Activated naive CD4-positive, alpha-beta T cell treated with anti-CD3 and anti-CD28 coated beads for 36 hours (primary cell): ENCODE measurements at regions of chr5 and their contacts with region 1.

Region 1: DNA sequence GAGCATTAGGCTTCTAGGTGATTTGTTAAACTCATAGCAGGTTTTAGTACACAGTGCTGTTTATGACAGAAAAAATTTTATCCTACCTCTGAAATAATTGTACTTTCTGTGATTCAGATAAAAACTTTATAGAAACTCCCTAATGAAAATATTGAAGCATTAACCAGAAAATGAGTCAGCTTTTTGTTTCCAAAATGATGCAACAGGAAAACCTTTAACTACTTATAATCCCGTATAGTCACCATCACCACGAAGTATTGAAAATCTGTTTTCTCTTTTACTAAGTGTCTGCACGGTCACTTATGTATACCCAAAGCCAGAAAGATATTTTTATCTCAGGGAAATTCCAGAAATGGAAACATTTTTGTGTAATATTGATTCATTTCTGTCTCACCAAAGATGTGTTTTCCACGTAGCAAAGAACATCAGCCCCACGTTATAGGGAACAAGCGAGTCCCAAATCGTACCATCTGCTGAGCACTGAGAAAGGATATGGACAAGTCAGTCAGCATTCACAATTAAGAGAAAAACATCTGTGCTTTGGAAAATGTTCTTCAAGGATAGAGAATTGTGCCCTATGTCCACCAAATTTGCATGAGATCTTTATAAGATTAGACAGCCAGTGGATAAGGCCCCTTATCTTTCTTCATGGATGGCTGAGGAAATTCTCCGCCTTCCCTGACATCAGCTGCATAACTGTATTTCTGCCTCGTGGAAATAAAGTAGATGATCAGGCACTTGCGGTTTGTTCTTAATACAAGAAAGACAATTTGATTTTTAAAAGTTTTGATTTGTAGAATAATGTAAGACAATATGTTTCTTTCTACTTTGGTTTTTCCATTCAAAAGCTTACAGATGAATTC is 41.9 kb downstream of the TNFAIP8 start:
- DNase-seq: peak; percentile 55
- H3K4me3 Mint-ChIP-seq: peak overlapping the region; percentile 23
- H3K27ac Mint-ChIP-seq: peak overlapping the region; percentile 89
- H3K4me1 Mint-ChIP-seq: peaks cover 89% of the 10 kb centered on the region
- H3K27me3 Mint-ChIP-seq: no peaks in the 10 kb centered on the region

Region 2: GRCh38 chr5:118736396-118736795 is 661.4 kb before region 1 on chr5:
- CTCF ChIA-PET with region 1: no interaction called
- intact Hi-C with region 1: no loop called
- DNase-seq: no peak
- H3K4me3 Mint-ChIP-seq: no peak overlapping the region
- H3K27ac Mint-ChIP-seq: no peak overlapping the region
- H3K4me1 Mint-ChIP-seq: no peaks in the 10 kb centered on the region
- H3K27me3 Mint-ChIP-seq: no peaks in the 10 kb centered on the region

Region 3: DNA sequence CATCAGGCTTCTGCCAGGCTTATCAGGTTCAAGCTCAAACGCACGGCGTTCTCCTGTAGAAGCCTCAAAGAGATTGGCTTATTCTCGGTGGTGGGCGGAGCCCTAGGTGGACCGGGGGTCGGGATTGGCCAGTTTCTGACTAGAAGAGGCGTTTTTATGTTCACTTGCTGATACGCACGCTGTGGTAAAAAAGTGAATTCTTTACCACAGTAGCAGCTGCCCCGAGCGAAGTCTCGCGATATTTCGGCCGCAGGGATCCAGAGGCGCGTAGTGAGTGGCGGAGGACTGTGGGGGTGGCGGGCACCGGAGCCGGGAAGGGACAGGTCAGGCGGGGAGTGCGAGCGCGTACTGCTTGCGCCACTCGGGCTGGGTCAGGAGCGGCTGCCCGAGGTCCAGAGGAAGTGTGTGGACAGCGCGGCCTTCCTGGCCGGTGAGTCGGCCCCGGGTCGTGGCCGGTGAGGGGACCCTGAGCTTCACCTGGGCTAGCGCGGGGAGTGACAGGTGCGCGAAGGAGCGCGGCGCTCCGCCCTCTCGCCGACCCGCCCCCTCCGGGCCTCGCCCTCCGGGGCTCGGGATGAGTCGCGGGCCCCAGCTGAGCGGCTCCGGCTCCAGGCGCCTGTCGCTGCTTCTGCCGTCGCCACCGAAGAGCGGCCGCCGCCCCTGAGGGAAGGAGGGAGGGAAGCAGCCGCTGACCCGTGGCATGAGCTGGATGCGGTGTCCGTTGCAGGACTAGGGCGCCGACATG is 326.7 kb before region 1 on chr5 and contains the start of gene DMXL1:
- CTCF ChIA-PET with region 1: no interaction called
- intact Hi-C with region 1: loop called (anchors 1 kb)
- DNase-seq: peak; percentile 100
- H3K4me3 Mint-ChIP-seq: peak within 1 kb of the TSS; percentile 95
- H3K27ac Mint-ChIP-seq: peak within 1 kb of the TSS; percentile 97
- H3K4me1 Mint-ChIP-seq: peaks cover 38% of the 10 kb centered on the region
- H3K27me3 Mint-ChIP-seq: peaks cover 2% of the 10 kb centered on the region
- total RNA-seq, gene DMXL1: 16.4 to 18.0 TPM

Region 4: DNA sequence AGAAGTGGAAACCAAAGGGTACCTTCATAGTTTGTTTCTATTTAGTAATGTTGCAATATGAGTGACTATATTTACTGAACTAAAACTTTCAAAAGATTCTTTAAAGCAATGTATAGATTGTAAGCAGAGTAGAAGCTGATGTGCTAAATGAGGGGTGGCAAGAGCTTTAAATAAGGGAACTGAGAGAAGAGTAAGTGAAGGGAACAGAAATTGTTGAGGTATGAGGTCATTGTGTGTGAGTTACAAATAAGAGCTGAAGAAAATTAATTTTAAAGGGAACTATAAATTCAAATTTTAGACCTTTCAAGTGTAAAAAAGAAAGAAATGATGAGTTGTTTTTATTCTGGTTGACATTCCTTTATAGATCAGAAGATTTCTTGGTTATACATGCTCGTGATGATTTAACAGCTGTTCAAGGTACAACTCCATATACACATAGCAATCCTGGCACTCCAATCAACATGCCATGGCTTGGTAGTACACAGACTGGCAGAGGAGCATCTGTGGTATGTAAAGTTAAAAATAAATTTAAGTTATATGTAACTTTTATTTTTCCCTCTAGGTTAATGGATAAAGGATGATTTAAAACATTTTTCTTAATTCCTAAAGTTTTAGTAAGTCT is 177.1 kb before region 1 on chr5:
- CTCF ChIA-PET with region 1: no interaction called
- intact Hi-C with region 1: no loop called
- DNase-seq: no peak
- H3K4me3 Mint-ChIP-seq: no peak overlapping the region
- H3K27ac Mint-ChIP-seq: no peak overlapping the region
- H3K4me1 Mint-ChIP-seq: no peaks in the 10 kb centered on the region
- H3K27me3 Mint-ChIP-seq: no peaks in the 10 kb centered on the region

Region 5: DNA sequence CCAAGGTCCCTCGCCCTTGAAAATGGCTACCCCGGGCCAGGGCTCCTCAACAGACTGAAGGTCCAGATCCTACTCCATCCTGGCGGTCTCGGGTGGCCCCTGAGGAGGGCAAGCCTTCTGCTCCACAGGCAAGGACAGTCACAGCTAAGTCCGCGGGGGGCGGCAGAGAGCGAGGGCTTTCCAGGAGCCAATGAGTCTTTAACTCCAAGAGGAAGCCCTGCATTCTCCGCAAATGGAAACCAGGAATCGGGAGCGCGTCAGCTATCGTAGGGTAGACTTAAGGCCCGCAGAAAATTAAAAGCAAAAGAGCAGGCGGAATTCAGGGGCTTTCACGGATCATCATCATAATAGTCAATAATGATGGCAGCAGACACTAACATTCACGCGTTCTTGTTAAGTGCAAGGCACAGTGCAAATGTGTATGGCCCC is 129.8 kb before region 1 on chr5:
- CTCF ChIA-PET with region 1: no interaction called
- intact Hi-C with region 1: loop called (anchors 1 kb)
- DNase-seq: peak; percentile 93
- H3K4me3 Mint-ChIP-seq: peak overlapping the region; percentile 91
- H3K27ac Mint-ChIP-seq: peak overlapping the region; percentile 97
- H3K4me1 Mint-ChIP-seq: peaks cover 64% of the 10 kb centered on the region
- H3K27me3 Mint-ChIP-seq: no peaks in the 10 kb centered on the region

Region 6: DNA sequence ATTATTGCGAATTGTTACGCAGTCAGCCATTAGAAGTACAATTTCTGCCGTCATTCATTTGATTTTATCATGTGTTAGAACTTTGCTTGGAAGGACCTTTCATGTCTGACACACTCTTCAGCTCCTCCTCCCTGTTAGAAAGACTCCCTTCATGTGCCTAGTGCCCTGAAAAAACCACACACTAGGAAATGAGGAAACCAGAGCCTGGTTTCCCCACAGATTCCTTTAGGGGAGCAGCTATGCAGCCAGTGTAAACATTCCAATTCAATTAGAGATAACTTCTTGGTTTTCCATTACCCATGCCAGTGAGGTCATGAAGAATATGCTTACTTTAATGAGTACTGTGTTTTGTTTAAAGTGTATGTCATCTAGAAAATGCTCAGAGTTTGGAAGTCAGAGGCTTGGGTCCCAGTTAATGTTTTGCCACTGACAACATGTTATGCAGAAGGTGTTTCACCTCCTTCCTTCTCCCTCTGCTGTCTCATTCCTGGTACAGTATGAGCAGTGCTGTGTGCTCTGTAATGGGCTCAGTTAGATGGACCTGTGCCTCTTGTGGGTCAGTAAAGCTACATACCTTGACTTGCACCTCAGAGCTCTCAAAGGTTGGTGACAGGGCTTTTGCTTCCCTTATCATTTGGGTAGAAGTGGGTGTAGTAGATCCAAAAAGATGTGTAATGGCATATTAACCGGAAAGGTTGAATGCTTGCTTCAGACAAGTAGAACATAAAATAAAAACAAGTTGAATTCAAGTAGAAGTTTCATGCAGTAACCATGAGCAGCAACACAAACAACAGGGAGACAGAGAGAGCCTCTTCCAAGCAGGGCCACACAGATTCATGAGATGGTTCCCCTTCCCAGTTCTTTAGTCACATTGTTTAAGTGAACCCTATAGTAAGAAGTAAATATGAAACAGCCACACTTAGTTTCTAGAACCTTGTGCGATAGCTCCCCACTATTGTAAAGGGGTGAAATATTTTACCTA is 94.5 kb before region 1 on chr5:
- CTCF ChIA-PET with region 1: no interaction called
- intact Hi-C with region 1: loop called (anchors 1 kb)
- DNase-seq: no peak
- H3K4me3 Mint-ChIP-seq: peak overlapping the region; percentile 13
- H3K27ac Mint-ChIP-seq: peak overlapping the region; percentile 97
- H3K4me1 Mint-ChIP-seq: peaks cover 91% of the 10 kb centered on the region
- H3K27me3 Mint-ChIP-seq: no peaks in the 10 kb centered on the region

Region 7: GRCh38 chr5:119340597-119341218 is 57.0 kb before region 1 on chr5:
- CTCF ChIA-PET with region 1: interaction called, 4 read pairs
- intact Hi-C with region 1: loop called (anchors 1 kb)
- DNase-seq: peak; percentile 68
- H3K4me3 Mint-ChIP-seq: peak overlapping the region; percentile 69
- H3K27ac Mint-ChIP-seq: peak overlapping the region; percentile 96
- H3K4me1 Mint-ChIP-seq: peaks cover 93% of the 10 kb centered on the region
- H3K27me3 Mint-ChIP-seq: no peaks in the 10 kb centered on the region